ENCODE measurements at regions of chr18 and their contacts with region 1.

Region 1: GRCh38 chr18:712401-713134 is at the start of gene ENOSF1:
- DNase-seq: peak; percentile 93
- CTCF ChIP-seq: peak; percentile 83

Region 2: GRCh38 chr18:551404-552061 is 161.0 kb before region 1 on chr18:
- CTCF ChIA-PET with region 1: no interaction called
- POLR2A ChIA-PET with region 1: no interaction called
- DNase-seq: no peak
- CTCF ChIP-seq: no peak

Region 3: DNA sequence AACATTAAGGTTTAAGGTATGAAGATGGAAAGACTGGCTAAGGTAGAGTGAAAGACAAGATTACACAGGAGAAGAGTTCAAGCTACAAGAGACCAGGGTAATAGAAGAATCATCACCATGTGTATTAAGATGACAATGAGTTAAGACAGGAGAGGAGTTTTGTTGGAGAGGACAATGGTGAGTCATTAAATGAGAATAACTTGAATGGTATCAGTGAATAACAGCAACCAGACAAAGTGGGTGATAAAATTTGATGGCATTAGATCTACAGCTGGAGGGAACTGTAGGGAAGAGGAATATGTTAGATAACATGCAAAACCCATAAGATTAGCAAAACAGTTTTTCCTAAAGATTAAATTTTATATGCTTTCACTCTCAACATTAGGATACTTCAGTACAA is 18.6 kb after region 1 on chr18:
- CTCF ChIA-PET with region 1: interaction called, 10 read pairs
- POLR2A ChIA-PET with region 1: no interaction called
- DNase-seq: no peak
- CTCF ChIP-seq: no peak

Measured in GM10248 (cell line).